Spleen (tissue), 13 donors: ENCODE measurements at regions of chr17 and their contacts with region 1.

Region 1: DNA sequence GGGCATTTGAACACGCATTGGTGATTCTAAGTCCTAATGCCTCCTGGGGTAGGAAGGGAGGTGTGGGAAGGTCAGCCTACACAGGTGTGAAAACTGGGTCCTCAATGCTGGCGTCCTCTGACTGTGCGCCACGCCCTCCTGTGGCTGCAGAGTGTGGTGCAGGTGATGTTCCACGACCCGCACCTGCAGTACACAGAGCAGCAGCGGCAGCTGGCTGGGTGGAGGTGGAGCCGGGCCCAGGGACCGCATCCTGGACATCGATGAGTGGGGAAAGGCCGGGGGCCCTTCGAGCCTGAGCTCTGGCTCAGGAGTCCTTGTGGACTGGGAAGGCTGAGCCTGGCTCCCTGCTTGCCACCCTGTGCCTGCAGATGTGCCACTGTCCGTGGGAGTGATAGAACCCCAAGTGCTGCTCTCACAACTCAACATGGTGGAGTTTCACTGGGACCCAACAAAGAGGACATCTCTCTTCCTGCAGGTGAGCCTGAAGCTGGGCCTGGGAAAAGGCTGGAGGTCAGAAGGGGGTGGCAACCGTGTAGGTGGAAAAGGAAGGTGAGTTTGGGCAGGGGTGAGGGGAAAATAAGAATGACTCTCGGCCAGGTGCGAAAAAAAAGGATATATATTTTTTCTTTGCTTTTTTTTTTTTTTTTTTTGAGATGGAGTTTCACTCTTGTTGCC is 14.0 kb upstream of the STAC2 start:
- DNase-seq: peak; percentile 89
- H3K4me3 ChIP-seq: no peak overlapping the region
- H3K27ac ChIP-seq: no peak overlapping the region
- H3K4me1 ChIP-seq: peaks cover 6 to 36% (median 31%) of the 10 kb centered on the region in 6 donors
- H3K27me3 ChIP-seq: peaks cover 0 to 54% (median 0%) of the 10 kb centered on the region in 7 donors
- CTCF ChIP-seq: peak in 10 of 11 experiments; percentile 47 to 78 (median 58)
- POLR2A ChIP-seq: no peak

Region 2: DNA sequence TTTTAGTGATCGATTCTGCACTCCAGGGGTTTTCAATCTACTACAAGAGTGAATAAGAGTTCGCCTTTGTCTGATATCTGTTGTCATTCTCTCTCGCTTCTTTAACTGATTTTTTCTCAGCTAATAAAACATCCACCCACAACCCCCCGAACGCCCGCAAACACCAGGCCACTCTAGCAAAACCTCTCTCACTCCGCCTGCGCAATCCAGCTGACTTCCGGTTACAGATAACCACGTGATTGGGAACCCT is 40.0 kb before region 1 on chr17:
- intact Hi-C with region 1: loop called (anchors 2 kb)
- DNase-seq: peak; percentile 94
- H3K4me3 ChIP-seq: peak overlapping the region; percentile 24 to 98 (median 94)
- H3K27ac ChIP-seq: peak overlapping the region; percentile 95 to 99 (median 97)
- H3K4me1 ChIP-seq: peaks cover 21 to 90% (median 74%) of the 10 kb centered on the region in 6 donors
- H3K27me3 ChIP-seq: peaks cover 0 to 12% (median 0%) of the 10 kb centered on the region in 7 donors
- CTCF ChIP-seq: no peak
- POLR2A ChIP-seq: no peak